Endothelial cell of umbilical vein (primary cell): ENCODE measurements at regions of chr16 and their contacts with region 1.

Region 1: DNA sequence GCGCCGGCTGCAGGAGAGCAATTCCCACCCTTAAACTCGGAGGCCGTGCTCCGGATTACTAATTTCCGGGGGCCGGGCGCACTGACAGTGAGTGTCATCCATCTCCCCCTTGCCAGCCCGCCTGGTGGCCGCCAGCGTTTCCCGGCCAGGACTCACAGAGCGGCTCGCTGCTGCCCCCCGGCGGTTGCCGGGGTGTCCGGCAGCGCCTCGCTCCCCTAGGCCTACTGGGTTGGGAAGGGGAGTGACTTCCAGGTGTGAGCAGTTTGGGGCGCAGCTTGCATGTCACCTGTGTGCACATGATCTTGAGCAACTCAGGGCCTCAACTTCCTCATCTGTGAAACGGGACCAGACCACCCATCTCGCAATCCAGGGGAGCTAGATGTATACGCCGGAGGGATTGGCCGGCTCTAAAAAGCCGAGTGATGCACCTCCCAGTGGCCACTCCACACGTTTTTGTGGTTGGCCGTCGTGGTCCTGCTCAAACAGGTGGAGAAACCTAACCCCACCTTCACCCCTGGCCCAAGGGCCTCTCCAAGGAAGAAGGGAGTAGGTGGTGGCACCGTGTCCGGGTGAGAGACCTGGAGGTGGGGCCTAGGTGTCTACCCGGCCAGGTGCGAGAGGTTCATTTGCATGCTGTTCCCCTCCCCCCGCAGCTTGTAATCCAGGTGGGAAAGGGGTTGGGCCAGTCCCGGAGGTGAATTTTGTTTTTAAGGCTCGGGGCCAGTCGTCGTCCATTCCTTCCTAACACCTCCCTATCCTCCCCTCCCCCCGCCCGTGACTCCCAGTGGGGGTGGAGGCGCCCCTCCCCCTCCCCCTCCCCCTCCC is 2.4 kb upstream of the GSE1 start:
- DNase-seq: peak; percentile 53
- H3K4me3 ChIP-seq: no peak overlapping the region
- H3K27ac ChIP-seq: no peak overlapping the region
- H3K4me1 ChIP-seq: peaks cover 12% of the 10 kb centered on the region
- H3K27me3 ChIP-seq: peaks cover 0 to 2% of the 10 kb centered on the region in 2 experiments
- CTCF ChIP-seq: peak; percentile 98 to 99
- POLR2A ChIP-seq: no peak

Region 2: DNA sequence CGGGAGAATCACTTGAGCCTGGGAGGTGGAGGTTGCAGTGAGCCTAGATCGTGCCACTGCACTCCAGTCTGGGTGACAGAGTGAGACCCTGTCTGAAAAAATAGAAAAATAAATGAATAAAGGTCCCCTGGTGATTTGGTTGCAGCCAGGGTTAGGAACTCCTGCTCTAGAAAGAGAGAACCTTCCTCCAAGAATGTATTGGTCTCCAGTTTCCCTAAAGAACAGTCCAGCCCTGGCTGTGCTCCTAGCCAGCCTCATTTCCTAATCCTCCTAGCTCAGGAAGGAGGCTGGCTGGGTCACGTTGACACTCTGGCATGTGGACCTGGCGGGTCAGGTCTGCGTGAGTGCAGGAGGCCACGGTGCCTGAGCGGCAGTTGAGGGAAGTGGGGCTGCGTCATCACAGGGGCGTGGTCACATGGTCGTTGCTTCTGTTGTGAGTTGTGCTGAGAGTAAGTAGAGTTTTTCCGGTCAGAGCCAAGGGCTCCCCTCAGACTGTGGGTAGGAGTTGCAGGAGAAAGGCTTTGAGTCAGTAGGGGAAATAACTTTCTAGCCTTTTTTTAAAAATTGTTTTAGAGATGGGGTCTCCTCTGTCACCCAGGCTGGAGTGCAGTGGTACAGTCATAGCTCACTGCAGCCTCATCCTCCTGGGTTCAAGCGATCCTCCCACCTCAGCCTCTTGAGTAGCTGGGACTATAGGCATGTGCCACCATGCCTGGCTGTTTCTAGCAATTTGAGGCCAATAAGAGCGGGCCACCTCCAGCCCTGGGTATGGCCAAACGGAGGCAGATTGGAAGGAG is 304.5 kb before region 1 on chr16:
- CTCF ChIA-PET with region 1: interaction called, 6 read pairs
- POLR2A ChIA-PET with region 1: no interaction called
- dilution Hi-C with region 1: no loop called
- intact Hi-C with region 1: loop called (anchors 10 kb)
- DNase-seq: peak; percentile 92
- H3K4me3 ChIP-seq: no peak overlapping the region
- H3K27ac ChIP-seq: no peak overlapping the region
- H3K4me1 ChIP-seq: peaks cover 14% of the 10 kb centered on the region
- H3K27me3 ChIP-seq: no peaks in the 10 kb centered on the region
- CTCF ChIP-seq: no peak
- POLR2A ChIP-seq: no peak

Region 3: DNA sequence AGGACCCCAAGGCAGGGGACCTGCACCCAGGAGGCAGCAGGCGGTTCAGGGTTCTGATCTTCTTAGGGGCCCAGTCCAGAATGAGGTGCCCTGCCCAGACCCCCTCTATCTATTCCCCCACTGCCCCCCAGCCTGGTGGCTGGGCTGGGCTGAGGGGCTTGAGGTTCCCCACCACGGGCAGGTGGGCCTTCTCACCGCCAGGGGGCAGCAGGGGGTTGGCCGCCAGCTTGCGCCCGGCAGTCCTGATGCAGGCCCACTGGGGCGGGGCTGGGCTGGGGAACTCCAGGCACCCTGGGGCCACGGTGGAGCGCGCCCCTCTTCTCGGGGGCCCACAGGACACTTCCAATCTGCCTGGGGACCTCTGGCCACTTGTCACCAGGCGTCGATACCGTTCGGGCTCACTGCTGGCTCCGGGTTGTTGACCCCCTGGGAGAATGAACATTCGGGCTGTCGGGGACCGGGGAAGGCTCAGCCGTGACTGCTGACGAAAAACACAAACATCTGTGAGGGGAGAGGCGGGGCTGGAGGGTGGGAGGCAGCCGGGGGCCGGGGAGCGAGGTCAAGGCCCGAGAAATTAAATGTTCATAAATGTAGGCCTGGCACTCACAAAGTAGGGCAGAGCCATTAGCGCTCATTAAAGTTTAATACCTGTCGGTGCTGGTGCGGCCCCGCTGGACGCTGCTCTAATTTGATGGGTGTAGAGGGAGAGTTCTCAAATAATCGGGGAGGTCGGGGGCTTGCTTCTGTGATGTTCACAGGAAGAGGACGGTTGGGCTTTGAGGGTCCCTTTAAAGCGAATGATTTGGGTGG is 216.8 kb before region 1 on chr16:
- CTCF ChIA-PET with region 1: interaction called, 35 read pairs
- POLR2A ChIA-PET with region 1: no interaction called
- dilution Hi-C with region 1: no loop called
- intact Hi-C with region 1: loop called (anchors 1 kb)
- DNase-seq: no peak
- H3K4me3 ChIP-seq: no peak overlapping the region
- H3K27ac ChIP-seq: no peak overlapping the region
- H3K4me1 ChIP-seq: peaks cover 12% of the 10 kb centered on the region
- H3K27me3 ChIP-seq: no peaks in the 10 kb centered on the region
- CTCF ChIP-seq: peak; percentile 74 to 92
- POLR2A ChIP-seq: no peak

Region 4: DNA sequence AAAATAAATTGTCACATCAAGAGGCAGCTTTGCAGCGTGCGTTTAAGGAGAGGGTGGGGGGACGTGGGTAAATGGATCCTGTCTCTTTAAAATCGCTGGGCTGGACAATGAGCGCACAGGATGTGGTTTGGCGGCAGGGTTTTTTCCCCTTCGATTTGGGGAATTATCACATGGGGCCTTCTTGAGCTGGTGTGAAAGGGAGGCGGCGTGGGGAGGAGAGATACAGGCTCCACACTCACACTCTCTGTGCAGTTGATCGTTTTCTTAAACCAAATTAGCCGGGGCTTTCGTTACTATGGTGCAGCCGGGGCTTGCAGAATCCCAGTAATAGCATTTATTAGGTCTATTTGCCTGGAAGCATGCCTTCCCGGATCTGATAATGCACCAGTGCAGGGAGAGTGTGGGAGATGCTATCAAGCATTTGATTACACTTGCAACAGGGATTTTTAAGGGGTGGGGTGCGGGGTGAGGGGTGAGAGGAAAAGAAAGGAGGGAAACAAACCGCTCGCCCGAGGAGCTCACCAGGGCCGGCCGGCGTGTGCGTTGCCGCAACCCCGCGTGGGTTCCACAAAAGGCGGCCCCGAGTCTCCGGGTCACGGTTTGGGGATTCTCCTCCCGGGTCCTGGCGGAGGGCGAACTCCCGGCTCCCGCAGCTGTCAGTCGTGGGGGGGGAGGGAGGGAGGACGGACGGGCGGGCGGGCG is 56.5 kb before region 1 on chr16:
- CTCF ChIA-PET with region 1: interaction called, 7 read pairs
- POLR2A ChIA-PET with region 1: no interaction called
- dilution Hi-C with region 1: no loop called
- intact Hi-C with region 1: loop called (anchors 2 kb)
- DNase-seq: peak; percentile 45
- H3K4me3 ChIP-seq: peak overlapping the region; percentile 29 to 48 (median 39)
- H3K27ac ChIP-seq: peak overlapping the region; percentile 3
- H3K4me1 ChIP-seq: peaks cover 18% of the 10 kb centered on the region
- H3K27me3 ChIP-seq: no peaks in the 10 kb centered on the region
- CTCF ChIP-seq: no peak
- POLR2A ChIP-seq: no peak

Region 5: GRCh38 chr16:85717393-85718121 is 106.8 kb after region 1 on chr16:
- CTCF ChIA-PET with region 1: interaction called, 5 read pairs
- POLR2A ChIA-PET with region 1: no interaction called
- dilution Hi-C with region 1: no loop called
- intact Hi-C with region 1: loop called (anchors 1 kb)
- DNase-seq: peak; percentile 57
- H3K4me3 ChIP-seq: no peak overlapping the region
- H3K27ac ChIP-seq: no peak overlapping the region
- H3K4me1 ChIP-seq: peaks cover 25% of the 10 kb centered on the region
- H3K27me3 ChIP-seq: no peaks in the 10 kb centered on the region
- CTCF ChIP-seq: peak; percentile 66 to 70
- POLR2A ChIP-seq: no peak

Region 6: DNA sequence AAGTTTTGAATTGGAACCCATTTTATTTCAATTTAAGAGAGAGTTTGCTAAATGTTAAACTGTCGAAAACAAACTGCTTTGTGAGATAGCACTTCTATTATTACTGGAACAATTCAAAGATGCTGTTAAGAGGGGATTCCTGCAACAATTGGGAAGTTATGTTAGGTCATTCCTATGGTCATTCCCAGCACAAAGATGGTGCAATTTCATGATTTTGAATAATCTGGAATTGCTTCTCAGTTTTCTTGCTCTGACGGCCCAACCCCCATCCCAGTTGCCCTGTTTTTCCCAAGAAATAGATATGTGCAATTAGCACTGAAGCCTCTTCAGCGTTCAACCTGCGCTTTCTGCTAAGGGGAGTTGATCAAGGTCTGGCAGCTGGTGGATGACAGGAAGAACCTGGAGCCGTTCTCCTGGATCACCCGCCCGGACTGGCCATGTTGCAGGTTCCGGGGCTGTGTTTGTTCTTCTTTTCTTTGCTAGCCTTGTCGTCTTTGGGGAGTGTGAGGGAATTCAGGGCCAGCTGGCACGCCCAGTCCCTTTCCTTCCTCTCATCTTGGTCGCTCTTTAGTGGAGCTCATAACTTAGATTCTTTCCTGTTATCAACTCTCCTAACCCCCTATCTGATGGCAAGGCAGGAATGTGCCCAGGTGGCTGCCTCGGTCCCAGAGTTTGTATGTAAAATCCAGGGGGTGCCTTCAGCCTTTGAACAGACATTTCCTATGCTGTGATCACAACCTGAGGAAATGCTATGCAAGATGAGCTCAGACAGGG is 259.3 kb after region 1 on chr16:
- CTCF ChIA-PET with region 1: no interaction called
- POLR2A ChIA-PET with region 1: no interaction called
- dilution Hi-C with region 1: no loop called
- intact Hi-C with region 1: no loop called
- DNase-seq: no peak
- H3K4me3 ChIP-seq: no peak overlapping the region
- H3K27ac ChIP-seq: no peak overlapping the region
- H3K4me1 ChIP-seq: no peaks in the 10 kb centered on the region
- H3K27me3 ChIP-seq: peaks cover 15 to 19% of the 10 kb centered on the region in 2 experiments
- CTCF ChIP-seq: no peak
- POLR2A ChIP-seq: no peak